ENCODE measurements at regions of chr14 and their contacts with region 1.

Region 1: GRCh38 chr14:68741839-68742470 is 50.9 kb downstream of the ZFP36L1 start:
- DNase-seq: peak; percentile 65
- ATAC-seq: peak; percentile 89
- H3K4me3 Mint-ChIP-seq: peak overlapping the region; percentile 32
- H3K27ac Mint-ChIP-seq: peak overlapping the region; percentile 86
- H3K4me1 Mint-ChIP-seq: peaks cover 54% of the 10 kb centered on the region
- H3K27me3 Mint-ChIP-seq: no peaks in the 10 kb centered on the region
- CTCF ChIP-seq: no peak

Region 2: DNA sequence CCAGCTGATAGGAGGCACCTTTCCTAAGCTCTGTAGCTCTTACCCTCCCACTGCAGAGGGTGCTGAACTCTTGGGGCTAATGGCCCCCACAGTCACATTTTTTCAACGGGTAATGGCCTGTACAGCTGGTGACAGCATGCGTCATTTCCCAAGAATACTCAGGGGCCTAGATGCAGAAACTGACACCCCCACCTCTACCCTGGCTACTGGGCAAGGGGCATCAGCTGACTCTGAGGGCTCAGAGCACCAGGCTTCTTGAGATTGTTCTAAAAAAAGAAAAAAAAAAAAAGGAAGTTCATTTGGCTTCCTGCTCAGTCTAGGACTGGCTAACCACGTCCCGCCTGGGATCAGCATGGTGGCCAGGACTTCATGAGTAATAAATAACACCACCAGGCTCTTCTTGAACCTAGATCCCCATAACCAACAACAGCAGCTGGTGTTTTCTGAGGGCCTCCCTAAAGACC is 15.7 kb after region 1 on chr14:
- CTCF ChIA-PET with region 1: interaction called, 3 read pairs
- POLR2A ChIA-PET with region 1: interaction called, 5 read pairs
- intact Hi-C with region 1: loop called (anchors 2 kb)
- DNase-seq: no peak
- ATAC-seq: peak; percentile 88
- H3K4me3 Mint-ChIP-seq: no peak overlapping the region
- H3K27ac Mint-ChIP-seq: peak overlapping the region; percentile 18
- H3K4me1 Mint-ChIP-seq: peaks cover 33% of the 10 kb centered on the region
- H3K27me3 Mint-ChIP-seq: no peaks in the 10 kb centered on the region
- CTCF ChIP-seq: no peak

Region 3: GRCh38 chr14:68884031-68885030 is 142.4 kb after region 1 on chr14:
- CTCF ChIA-PET with region 1: no interaction called
- POLR2A ChIA-PET with region 1: no interaction called
- intact Hi-C with region 1: no loop called
- DNase-seq: no peak
- ATAC-seq: no peak
- H3K4me3 Mint-ChIP-seq: no peak overlapping the region
- H3K27ac Mint-ChIP-seq: no peak overlapping the region
- H3K4me1 Mint-ChIP-seq: no peaks in the 10 kb centered on the region
- H3K27me3 Mint-ChIP-seq: no peaks in the 10 kb centered on the region
- CTCF ChIP-seq: no peak